Activated CD8-positive, alpha-beta T cell treated with anti-CD3 and anti-CD28 coated beads, Interleukin-2, amount 10 ng/mL, durations not matched to agents 7 days and 5 days (primary cell): ENCODE measurements at regions of chr2 and their contacts with region 1.

Region 1: GRCh38 chr2:63861220-63861822 is 19.6 kb downstream of the UGP2 start:
- DNase-seq: peak; percentile 72
- ATAC-seq: peak; percentile 43
- H3K4me3 Mint-ChIP-seq: no peak overlapping the region
- H3K27ac Mint-ChIP-seq: peak overlapping the region; percentile 5
- H3K4me1 Mint-ChIP-seq: peaks cover 50% of the 10 kb centered on the region
- H3K27me3 Mint-ChIP-seq: no peaks in the 10 kb centered on the region

Region 2: DNA sequence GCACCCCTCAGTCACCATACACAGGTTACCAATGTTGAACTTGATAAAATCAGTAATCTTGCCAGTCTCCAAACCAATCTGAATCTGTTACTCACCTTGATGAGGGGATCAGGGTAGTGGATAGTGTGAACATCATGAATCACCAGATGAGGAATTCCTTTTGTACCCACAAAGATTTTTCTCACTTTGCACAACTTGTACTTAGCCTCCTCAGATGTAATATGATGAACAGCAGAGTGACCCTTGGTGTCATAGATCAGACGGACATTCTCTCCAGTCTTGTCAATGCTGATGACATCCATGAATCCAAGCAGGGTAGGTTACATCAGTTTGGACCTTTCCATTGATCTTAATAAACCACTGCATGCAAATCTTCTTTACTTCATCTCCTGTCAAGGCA is 217.8 kb before region 1 on chr2:
- CTCF ChIA-PET with region 1: no interaction called
- POLR2A ChIA-PET with region 1: no interaction called
- DNase-seq: no peak
- ATAC-seq: no peak
- H3K4me3 Mint-ChIP-seq: no peak overlapping the region
- H3K27ac Mint-ChIP-seq: no peak overlapping the region
- H3K4me1 Mint-ChIP-seq: no peaks in the 10 kb centered on the region
- H3K27me3 Mint-ChIP-seq: peaks cover 16% of the 10 kb centered on the region

Region 3: GRCh38 chr2:63692002-63692606 is 169.2 kb before region 1 on chr2:
- CTCF ChIA-PET with region 1: interaction called, 33 read pairs
- POLR2A ChIA-PET with region 1: no interaction called
- DNase-seq: peak; percentile 43
- ATAC-seq: no peak
- H3K4me3 Mint-ChIP-seq: no peak overlapping the region
- H3K27ac Mint-ChIP-seq: no peak overlapping the region
- H3K4me1 Mint-ChIP-seq: no peaks in the 10 kb centered on the region
- H3K27me3 Mint-ChIP-seq: peaks cover 3% of the 10 kb centered on the region

Region 4: DNA sequence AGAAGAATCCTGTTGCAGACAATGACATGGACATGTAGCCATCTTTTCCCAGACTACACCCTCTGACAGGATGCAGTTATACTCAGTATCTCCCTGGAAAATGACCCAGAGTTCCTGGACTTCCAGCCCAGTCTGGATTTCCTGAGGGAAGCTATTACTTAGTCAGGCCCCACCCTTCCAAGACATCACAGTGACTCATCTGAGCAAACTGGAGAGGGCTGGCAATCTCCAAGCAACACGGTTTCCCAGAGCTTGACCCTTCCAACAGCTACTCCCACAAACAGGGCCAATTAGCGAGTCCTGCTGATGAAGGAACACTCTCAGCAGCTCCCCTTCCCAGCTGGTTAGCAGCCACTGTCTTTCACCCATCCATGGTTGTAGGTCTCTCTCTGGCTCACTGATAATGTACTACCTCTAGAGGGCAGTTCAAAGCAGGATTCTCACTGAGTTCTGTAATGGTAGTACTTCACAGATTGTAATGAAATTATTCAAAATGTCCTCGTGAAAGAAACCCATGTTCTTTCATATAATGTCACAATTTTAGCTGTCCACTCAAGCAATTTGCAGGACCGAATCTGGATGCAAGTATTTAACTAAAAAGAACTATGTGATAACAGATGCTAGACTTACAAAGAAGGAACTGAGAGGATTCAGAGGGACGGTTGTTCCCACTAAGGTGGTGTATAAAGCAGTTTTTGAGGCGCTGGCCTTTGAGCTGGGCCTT is 162.3 kb before region 1 on chr2:
- CTCF ChIA-PET with region 1: interaction called, 61 read pairs
- POLR2A ChIA-PET with region 1: no interaction called
- DNase-seq: peak; percentile 24
- ATAC-seq: peak; percentile 80
- H3K4me3 Mint-ChIP-seq: no peak overlapping the region
- H3K27ac Mint-ChIP-seq: no peak overlapping the region
- H3K4me1 Mint-ChIP-seq: no peaks in the 10 kb centered on the region
- H3K27me3 Mint-ChIP-seq: peaks cover 2% of the 10 kb centered on the region

Region 5: DNA sequence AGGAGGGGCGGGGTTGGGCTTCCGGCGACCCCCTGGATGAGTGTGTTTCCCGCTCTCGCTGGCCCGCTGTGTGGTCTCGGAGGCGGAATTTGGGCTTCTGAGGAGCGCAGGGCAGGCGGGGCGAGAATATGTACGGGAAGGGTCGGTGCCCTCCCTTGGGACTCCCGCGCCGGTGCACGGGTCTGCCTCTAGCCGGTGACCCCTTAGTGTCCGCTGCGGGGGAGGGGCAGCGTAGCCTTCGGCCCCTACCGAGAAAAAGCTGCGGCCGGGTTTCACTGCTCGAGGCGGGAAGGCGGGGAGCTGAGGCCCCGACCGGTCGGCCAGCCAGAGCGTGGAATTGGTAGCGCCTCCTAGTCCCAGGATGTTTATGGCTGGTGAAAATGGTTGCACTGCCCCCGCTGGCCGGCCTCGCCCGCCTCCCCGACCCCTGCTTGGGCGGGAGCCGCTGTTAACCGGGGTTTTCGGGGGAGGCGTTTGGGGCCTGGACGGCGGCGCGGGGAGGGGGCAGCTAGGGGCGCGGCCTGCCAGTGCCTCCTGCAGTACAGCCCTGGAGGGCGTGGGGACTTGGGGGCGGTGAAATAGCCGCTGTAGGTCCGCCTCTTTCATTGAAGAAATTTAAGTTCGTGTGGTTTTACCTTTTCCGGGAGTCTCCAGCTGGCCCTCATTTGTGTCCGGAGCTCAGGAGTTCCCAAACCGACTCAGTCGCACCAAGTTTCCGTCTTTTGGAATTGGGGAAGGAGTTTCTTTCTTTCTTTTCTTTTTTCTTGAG is 19.9 kb before region 1 on chr2 and contains the start of gene UGP2:
- CTCF ChIA-PET with region 1: interaction called, 95 read pairs
- POLR2A ChIA-PET with region 1: interaction called, 315 read pairs
- DNase-seq: peak; percentile 94
- ATAC-seq: peak; percentile 76
- H3K4me3 Mint-ChIP-seq: peak within 1 kb of the TSS; percentile 98
- H3K27ac Mint-ChIP-seq: peak within 1 kb of the TSS; percentile 99
- H3K4me1 Mint-ChIP-seq: peaks cover 55% of the 10 kb centered on the region
- H3K27me3 Mint-ChIP-seq: peaks cover 2% of the 10 kb centered on the region
- total RNA-seq, gene UGP2: 161 to 164 TPM

Region 6: DNA sequence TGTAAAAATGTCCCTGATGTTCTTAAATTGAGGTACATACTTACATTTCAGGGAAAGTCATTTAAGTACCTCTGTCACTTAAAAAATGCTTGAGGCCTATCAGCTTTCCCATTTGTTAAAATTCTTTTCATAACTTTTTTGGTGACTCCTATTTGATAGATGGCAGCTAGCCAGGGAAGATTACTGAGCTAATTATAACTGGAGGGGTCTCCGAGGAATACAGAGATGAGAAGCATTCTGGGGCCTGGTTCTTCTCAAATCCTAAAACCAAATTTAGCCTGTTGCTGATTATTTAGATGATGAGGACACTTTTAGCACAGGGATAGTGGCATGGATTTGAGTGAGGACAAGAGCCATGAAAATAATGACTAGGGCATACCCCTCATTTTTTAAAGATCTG is 14.8 kb before region 1 on chr2:
- CTCF ChIA-PET with region 1: interaction called, 95 read pairs
- POLR2A ChIA-PET with region 1: interaction called, 315 read pairs
- DNase-seq: no peak
- ATAC-seq: no peak
- H3K4me3 Mint-ChIP-seq: no peak overlapping the region
- H3K27ac Mint-ChIP-seq: no peak overlapping the region
- H3K4me1 Mint-ChIP-seq: peaks cover 67% of the 10 kb centered on the region
- H3K27me3 Mint-ChIP-seq: no peaks in the 10 kb centered on the region

Region 7: DNA sequence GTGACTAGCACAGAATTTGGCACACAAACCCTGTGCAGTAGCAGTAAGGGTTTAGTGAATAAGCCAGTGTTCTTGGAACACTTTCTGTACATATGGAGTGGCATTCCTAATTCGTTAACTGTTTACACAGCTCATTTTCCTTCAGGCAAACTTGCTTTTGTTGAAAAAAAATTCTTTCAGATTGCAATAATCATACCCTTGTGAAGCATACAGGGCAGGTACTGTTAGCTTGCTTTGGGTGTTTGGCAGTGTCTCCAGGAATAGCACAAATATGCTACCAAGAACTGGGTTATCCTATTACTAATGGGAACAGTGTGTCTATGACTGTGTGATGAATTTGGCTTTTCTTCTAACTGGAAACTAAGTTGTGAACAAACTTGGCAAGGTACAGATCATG is 13.8 kb after region 1 on chr2:
- CTCF ChIA-PET with region 1: interaction called, 19 read pairs
- POLR2A ChIA-PET with region 1: interaction called, 3 read pairs
- DNase-seq: no peak
- ATAC-seq: no peak
- H3K4me3 Mint-ChIP-seq: no peak overlapping the region
- H3K27ac Mint-ChIP-seq: peak overlapping the region; percentile 5
- H3K4me1 Mint-ChIP-seq: peaks cover 18% of the 10 kb centered on the region
- H3K27me3 Mint-ChIP-seq: no peaks in the 10 kb centered on the region

Region 8: DNA sequence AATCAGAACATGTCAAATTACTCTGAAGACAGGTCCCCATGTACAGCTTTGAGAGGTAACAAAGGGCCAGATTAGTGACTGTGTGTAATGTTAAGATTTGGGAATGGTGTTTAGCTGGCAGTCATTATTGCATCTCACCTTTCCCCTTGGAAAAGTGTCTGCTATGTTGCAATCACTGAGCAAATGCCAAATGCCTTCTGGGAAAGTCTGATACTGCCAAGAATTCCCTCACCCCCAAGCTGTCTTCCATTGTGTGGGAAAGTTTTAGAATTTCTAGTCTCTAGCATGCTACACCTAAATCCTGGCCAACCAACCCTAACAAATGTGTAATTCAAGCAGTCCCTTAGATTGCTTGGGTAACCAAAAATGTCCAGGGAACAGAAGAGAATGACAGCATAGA is 296.5 kb after region 1 on chr2:
- CTCF ChIA-PET with region 1: no interaction called
- POLR2A ChIA-PET with region 1: no interaction called
- DNase-seq: no peak
- ATAC-seq: no peak
- H3K4me3 Mint-ChIP-seq: no peak overlapping the region
- H3K27ac Mint-ChIP-seq: no peak overlapping the region
- H3K4me1 Mint-ChIP-seq: no peaks in the 10 kb centered on the region
- H3K27me3 Mint-ChIP-seq: peaks cover 14% of the 10 kb centered on the region